ENCODE measurements at regions of chr11 and their contacts with region 1.

Region 1: GRCh38 chr11:46278387-46279125 is 1.1 kb downstream of the CREB3L1 start:
- DNase-seq: no peak
- H3K4me3 ChIP-seq: peak overlapping the region; percentile 81
- H3K27me3 ChIP-seq: no peaks in the 10 kb centered on the region
- CTCF ChIP-seq: peak; percentile 90

Region 2: GRCh38 chr11:46117842-46118241 is 160.7 kb before region 1 on chr11:
- CTCF ChIA-PET with region 1: no interaction called
- POLR2A ChIA-PET with region 1: interaction called, 10 read pairs
- DNase-seq: no peak
- H3K4me3 ChIP-seq: no peak overlapping the region
- H3K27me3 ChIP-seq: no peaks in the 10 kb centered on the region
- CTCF ChIP-seq: peak; percentile 31; the same call in 1 of the 2 replicates

Region 3: GRCh38 chr11:46247664-46248063 is 30.9 kb before region 1 on chr11:
- CTCF ChIA-PET with region 1: interaction called, 120 read pairs
- POLR2A ChIA-PET with region 1: interaction called, 13 read pairs
- DNase-seq: no peak
- H3K4me3 ChIP-seq: no peak overlapping the region
- H3K27me3 ChIP-seq: no peaks in the 10 kb centered on the region
- CTCF ChIP-seq: no peak

Region 4: GRCh38 chr11:46295312-46296058 is 16.9 kb after region 1 on chr11:
- CTCF ChIA-PET with region 1: interaction called, 71 read pairs
- POLR2A ChIA-PET with region 1: interaction called, 5 read pairs
- DNase-seq: no peak
- H3K4me3 ChIP-seq: peak overlapping the region; percentile 51
- H3K27me3 ChIP-seq: no peaks in the 10 kb centered on the region
- CTCF ChIP-seq: no peak

Region 5: GRCh38 chr11:46308631-46309419 is 30.3 kb after region 1 on chr11:
- CTCF ChIA-PET with region 1: interaction called, 121 read pairs
- POLR2A ChIA-PET with region 1: no interaction called
- DNase-seq: no peak
- H3K4me3 ChIP-seq: no peak overlapping the region
- H3K27me3 ChIP-seq: no peaks in the 10 kb centered on the region
- CTCF ChIP-seq: peak; percentile 91

Region 6: GRCh38 chr11:46445920-46446771 is 167.6 kb after region 1 on chr11:
- CTCF ChIA-PET with region 1: no interaction called
- POLR2A ChIA-PET with region 1: no interaction called
- DNase-seq: no peak
- H3K4me3 ChIP-seq: no peak overlapping the region
- H3K27me3 ChIP-seq: no peaks in the 10 kb centered on the region
- CTCF ChIP-seq: peak; percentile 37

Region 7: DNA sequence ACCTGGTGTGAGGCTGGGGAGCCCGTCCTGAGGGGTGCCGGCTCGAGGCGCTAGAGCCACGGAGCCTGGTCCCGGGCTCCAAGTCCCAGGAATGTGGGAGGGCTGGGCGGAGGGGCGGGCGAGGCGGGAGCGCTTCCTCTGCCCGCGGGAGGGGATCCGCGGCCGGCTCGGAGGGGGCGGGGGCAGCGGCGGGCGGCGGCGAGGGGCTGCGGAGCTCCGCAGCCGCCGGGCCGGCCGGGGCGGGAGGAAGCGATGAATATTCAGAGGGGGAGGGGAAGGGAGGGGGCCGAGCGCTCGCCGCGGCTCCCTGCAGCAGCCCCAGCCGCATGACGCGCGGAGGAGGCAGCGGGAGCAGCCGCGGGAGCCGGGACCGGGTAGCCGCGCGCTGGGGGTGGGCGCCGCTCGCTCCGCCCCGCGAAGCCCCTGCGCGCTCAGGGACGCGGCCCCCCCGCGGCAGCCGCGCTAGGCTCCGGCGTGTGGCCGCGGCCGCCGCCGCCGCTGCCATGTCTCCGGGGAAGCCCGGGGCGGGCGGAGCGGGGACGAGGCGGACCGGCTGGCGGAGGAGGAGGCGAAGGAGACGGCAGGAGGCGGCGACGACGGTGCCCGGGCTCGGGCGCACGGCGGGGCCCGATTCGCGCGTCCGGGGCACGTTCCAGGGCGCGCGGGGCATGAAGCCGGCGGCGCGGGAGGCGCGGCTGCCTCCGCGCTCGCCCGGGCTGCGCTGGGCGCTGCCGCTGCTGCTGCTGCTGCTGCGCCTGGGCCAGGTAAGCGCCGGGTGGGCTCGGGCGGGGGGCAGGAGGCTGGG is 1701.9 kb after region 1 on chr11 and contains the start of gene PTPRJ:
- CTCF ChIA-PET with region 1: no interaction called
- POLR2A ChIA-PET with region 1: interaction called, 14 read pairs
- DNase-seq: no peak
- H3K4me3 ChIP-seq: peak within 1 kb of the TSS; percentile 81
- H3K27me3 ChIP-seq: no peaks in the 10 kb centered on the region
- CTCF ChIP-seq: no peak
- polyA plus RNA-seq, gene PTPRJ: 3.8 and 4.9 TPM in 2 replicates

Measured in BJ (cell line).